Right ventricle myocardium superior (tissue), 1 donor: ENCODE measurements at regions of chr1 and their contacts with region 1.

Region 1: GRCh38 chr1:52702886-52703787 is 5.0 kb upstream of the COA7 start:
- DNase-seq: peak; percentile 92
- ATAC-seq: peak; percentile 86

Region 2: GRCh38 chr1:52927212-52928014 is 224.3 kb after region 1 on chr1 and contains the start of gene SCP2:
- intact Hi-C with region 1: loop called (anchors 10 kb)
- DNase-seq: peak; percentile 91
- ATAC-seq: peak; percentile 95
- total RNA-seq, gene SCP2: 155 TPM